Naive thymus-derived CD4-positive, alpha-beta T cell (primary cell): ENCODE measurements at regions of chr22 and their contacts with region 1.

Region 1: GRCh38 chr22:24433813-24434470 is 6.5 kb downstream of the ADORA2A start:
- DNase-seq: no peak
- ATAC-seq: peak; percentile 75
- H3K4me3 ChIP-seq: peak overlapping the region; percentile 7
- H3K4me3 Mint-ChIP-seq: peak overlapping the region; percentile 73 to 84 (median 78)
- H3K27ac ChIP-seq: peak overlapping the region; percentile 97
- H3K27ac Mint-ChIP-seq: peak overlapping the region; percentile 85 to 97 (median 94)
- H3K4me1 ChIP-seq: peaks cover 87 to 88% of the 10 kb centered on the region in 2 donors
- H3K4me1 Mint-ChIP-seq: peaks cover 48 to 95% (median 86%) of the 10 kb centered on the region in 7 donors
- H3K27me3 ChIP-seq: no peaks in the 10 kb centered on the region
- H3K27me3 Mint-ChIP-seq: no peaks in the 10 kb centered on the region

Region 2: GRCh38 chr22:24379536-24379935 is 54.4 kb before region 1 on chr22:
- CTCF ChIA-PET with region 1: no interaction called
- POLR2A ChIA-PET with region 1: no interaction called
- intact Hi-C with region 1: loop called in 1 of 2 experiments (anchors 10 kb)
- DNase-seq: peak in 6 of 9 donors; percentile 1 to 55 (median 30)
- ATAC-seq: peak; percentile 49
- H3K4me3 ChIP-seq: no peak overlapping the region
- H3K4me3 Mint-ChIP-seq: peak overlapping the region; percentile 13 to 59 (median 42)
- H3K27ac ChIP-seq: no peak overlapping the region
- H3K27ac Mint-ChIP-seq: peak overlapping the region in 6 of 9 donors; percentile 15 to 88 (median 45)
- H3K4me1 ChIP-seq: peaks cover 4 to 14% of the 10 kb centered on the region in 2 donors
- H3K4me1 Mint-ChIP-seq: peaks cover 14 to 43% (median 38%) of the 10 kb centered on the region in 7 donors
- H3K27me3 ChIP-seq: no peaks in the 10 kb centered on the region
- H3K27me3 Mint-ChIP-seq: no peaks in the 10 kb centered on the region

Region 3: GRCh38 chr22:24460418-24461089 is 26.6 kb after region 1 on chr22:
- CTCF ChIA-PET with region 1: interaction called, 3 read pairs
- POLR2A ChIA-PET with region 1: interaction called, 4 read pairs
- intact Hi-C with region 1: loop called in 1 of 2 experiments (anchors 5 kb)
- DNase-seq: no peak
- ATAC-seq: no peak
- H3K4me3 ChIP-seq: no peak overlapping the region
- H3K4me3 Mint-ChIP-seq: peak overlapping the region in 1 of 10 donors; percentile 8
- H3K27ac ChIP-seq: no peak overlapping the region
- H3K27ac Mint-ChIP-seq: peak overlapping the region in 2 of 9 donors; percentile 63 to 67
- H3K4me1 ChIP-seq: no peaks in the 10 kb centered on the region
- H3K4me1 Mint-ChIP-seq: peaks cover 0 to 15% (median 0%) of the 10 kb centered on the region in 7 donors
- H3K27me3 ChIP-seq: no peaks in the 10 kb centered on the region
- H3K27me3 Mint-ChIP-seq: no peaks in the 10 kb centered on the region